Right ventricle myocardium superior (tissue), 1 donor: ENCODE measurements at regions of chr7 and their contacts with region 1.

Region 1: GRCh38 chr7:71220210-71220695 is 88.3 kb downstream of the GALNT17 start:
- DNase-seq: no peak
- ATAC-seq: peak; percentile 90

Region 2: DNA sequence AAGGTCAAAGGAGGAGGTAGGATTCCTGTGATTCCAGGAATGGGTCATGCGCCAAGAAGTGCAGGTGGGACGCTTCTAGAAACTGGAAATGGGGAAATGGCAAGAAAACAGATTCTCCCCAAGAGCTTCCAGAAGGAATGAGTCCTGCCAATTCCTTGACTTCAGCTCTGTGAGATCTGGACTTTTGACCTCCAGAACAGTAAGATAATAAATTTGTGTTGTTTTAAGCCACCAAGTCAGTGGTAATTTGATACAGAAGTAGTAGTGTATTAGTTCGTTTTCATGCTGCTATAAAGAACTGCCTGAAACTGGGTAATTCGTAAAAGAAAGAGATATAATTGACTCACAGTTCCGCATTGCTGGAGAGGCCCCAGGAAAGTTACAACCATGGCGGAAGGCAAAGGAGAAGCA is 266.9 kb before region 1 on chr7:
- intact Hi-C with region 1: no loop called
- DNase-seq: no peak
- ATAC-seq: no peak

Region 3: GRCh38 chr7:71237945-71238344 is 17.7 kb after region 1 on chr7:
- intact Hi-C with region 1: loop called (anchors 2 kb)
- DNase-seq: peak; percentile 46
- ATAC-seq: peak; percentile 88

Region 4: DNA sequence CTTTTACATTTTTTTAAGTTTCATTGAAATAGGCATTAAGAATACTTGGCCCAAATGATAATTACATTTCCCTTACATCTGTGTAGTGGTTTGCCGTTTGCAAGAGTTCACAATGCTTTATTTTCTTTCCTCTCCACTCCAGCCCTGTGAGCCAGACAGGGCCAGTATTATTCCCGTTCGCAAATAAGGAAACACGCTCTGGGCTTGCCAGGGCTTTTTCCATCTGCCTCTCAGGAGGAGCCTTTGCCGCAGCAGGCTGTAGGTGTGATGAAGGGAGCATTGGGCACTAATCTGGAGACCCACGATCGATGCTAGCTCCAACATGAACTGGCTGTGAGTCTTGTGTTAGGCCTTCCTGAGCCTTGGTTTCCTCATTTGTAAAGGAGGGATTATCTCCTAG is 66.1 kb after region 1 on chr7:
- intact Hi-C with region 1: no loop called
- DNase-seq: no peak
- ATAC-seq: peak; percentile 84